SK-N-SH (cell line): ENCODE measurements at regions of chr1 and their contacts with region 1.

Region 1: DNA sequence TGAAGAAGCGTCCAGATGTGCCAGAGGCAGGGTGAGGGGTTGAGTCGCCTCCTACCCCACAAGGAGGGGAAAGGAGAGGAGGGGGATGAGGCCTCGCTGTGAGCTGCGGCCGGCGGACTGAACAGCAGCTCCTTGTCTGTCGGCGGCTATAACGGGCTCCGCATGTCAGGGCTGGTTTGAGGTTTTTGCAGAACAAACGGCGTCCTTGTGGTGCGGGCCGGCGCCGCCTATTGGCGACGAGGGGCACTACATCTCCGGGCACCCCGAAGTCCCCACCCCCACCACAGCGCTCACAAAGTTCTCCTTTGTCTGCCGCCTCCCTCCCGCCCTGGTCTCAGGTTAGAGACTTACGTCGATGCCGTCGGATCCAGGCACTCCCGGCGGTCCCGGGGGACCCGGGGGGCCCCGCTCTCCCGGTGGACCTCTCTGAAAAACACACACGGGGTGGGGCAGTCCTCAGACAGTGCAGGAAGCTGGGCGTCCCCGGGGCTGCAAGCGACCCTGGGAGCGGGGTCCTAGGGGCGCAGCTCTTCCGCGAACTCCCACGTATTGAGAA is 1.8 kb downstream of the COL9A2 start:
- DNase-seq: peak; percentile 92
- H3K4me3 ChIP-seq: peak overlapping the region; percentile 29 to 47; a peak in 3 of 4 replicates
- H3K27ac ChIP-seq: no peak overlapping the region
- H3K4me1 ChIP-seq: peaks cover 0 to 6% of the 10 kb centered on the region in 2 experiments; a peak in 1 of 4 replicates
- H3K27me3 ChIP-seq: no peaks in the 10 kb centered on the region; the same call in 1 of the 2 replicates
- CTCF ChIP-seq: peak; percentile 75
- EP300 ChIP-seq: no peak
- RAD21 ChIP-seq: peak; percentile 58

Region 2: GRCh38 chr1:40178200-40178599 is 137.1 kb before region 1 on chr1:
- CTCF ChIA-PET with region 1: no interaction called
- POLR2A ChIA-PET with region 1: no interaction called
- DNase-seq: no peak
- H3K4me3 ChIP-seq: no peak overlapping the region
- H3K27ac ChIP-seq: no peak overlapping the region
- H3K4me1 ChIP-seq: peaks cover 0 to 9% of the 10 kb centered on the region in 2 experiments; a peak in 1 of 4 replicates
- H3K27me3 ChIP-seq: no peaks in the 10 kb centered on the region
- CTCF ChIP-seq: no peak
- EP300 ChIP-seq: no peak
- RAD21 ChIP-seq: no peak

Region 3: DNA sequence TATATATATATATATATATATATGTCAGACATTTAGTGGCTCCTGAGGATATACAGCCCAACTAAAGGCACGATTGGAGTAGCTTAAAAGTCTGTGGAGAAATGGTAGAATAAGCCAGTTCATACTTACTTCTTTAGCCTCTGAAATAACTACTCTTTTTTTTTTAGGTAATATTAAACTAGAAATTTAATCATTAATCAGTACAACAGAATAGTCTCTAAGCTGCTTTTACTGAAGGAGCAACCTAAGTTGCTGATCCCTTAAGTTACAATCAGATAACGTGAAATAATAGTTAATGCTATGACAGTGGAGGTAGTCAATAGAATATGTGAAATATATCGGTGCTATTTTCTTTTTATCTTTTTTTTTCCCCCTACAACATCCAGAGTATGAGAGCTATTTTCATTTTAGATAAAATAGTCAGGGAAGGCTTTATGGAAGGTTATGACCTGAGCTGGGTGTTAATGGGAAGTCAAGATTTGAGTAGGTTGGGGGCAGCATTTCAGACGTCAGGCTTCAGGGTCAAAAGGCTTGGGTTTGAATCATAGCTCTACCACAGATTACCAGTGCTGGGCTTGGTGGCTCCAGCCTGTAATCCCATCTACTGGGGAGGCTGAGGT is 41.7 kb before region 1 on chr1:
- CTCF ChIA-PET with region 1: interaction called, 10 read pairs
- POLR2A ChIA-PET with region 1: no interaction called
- DNase-seq: no peak
- H3K4me3 ChIP-seq: no peak overlapping the region
- H3K27ac ChIP-seq: no peak overlapping the region
- H3K4me1 ChIP-seq: no peaks in the 10 kb centered on the region; a peak in 1 of 4 replicates
- H3K27me3 ChIP-seq: no peaks in the 10 kb centered on the region
- CTCF ChIP-seq: no peak
- EP300 ChIP-seq: no peak
- RAD21 ChIP-seq: no peak

Region 4: DNA sequence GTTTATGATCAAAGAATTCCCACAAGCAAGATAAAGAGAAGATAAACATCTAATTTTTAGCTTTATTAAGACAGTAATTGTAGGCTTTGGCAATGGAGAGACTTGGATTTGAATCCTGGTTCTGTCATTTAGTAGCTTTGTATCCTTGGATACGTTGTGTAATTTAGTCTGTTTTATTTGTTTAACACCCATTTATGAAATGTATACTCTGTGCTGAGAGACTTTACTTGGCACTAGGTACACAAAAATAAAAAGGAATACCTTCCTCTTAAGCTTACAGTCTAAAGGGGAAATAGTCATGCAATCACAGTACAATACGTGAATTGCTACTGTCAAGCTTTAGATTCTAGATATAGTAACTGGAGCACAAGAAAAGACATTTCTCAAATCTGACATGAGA is 33.5 kb before region 1 on chr1:
- CTCF ChIA-PET with region 1: interaction called, 12 read pairs
- POLR2A ChIA-PET with region 1: no interaction called
- DNase-seq: no peak
- H3K4me3 ChIP-seq: no peak overlapping the region
- H3K27ac ChIP-seq: no peak overlapping the region
- H3K4me1 ChIP-seq: no peaks in the 10 kb centered on the region
- H3K27me3 ChIP-seq: no peaks in the 10 kb centered on the region
- CTCF ChIP-seq: no peak
- EP300 ChIP-seq: no peak
- RAD21 ChIP-seq: no peak

Region 5: GRCh38 chr1:40299366-40300248 is 15.7 kb before region 1 on chr1:
- CTCF ChIA-PET with region 1: interaction called, 22 read pairs
- POLR2A ChIA-PET with region 1: no interaction called
- DNase-seq: no peak
- H3K4me3 ChIP-seq: no peak overlapping the region
- H3K27ac ChIP-seq: no peak overlapping the region
- H3K4me1 ChIP-seq: no peaks in the 10 kb centered on the region; a peak in 1 of 4 replicates
- H3K27me3 ChIP-seq: no peaks in the 10 kb centered on the region
- CTCF ChIP-seq: no peak
- EP300 ChIP-seq: no peak
- RAD21 ChIP-seq: no peak

Region 6: DNA sequence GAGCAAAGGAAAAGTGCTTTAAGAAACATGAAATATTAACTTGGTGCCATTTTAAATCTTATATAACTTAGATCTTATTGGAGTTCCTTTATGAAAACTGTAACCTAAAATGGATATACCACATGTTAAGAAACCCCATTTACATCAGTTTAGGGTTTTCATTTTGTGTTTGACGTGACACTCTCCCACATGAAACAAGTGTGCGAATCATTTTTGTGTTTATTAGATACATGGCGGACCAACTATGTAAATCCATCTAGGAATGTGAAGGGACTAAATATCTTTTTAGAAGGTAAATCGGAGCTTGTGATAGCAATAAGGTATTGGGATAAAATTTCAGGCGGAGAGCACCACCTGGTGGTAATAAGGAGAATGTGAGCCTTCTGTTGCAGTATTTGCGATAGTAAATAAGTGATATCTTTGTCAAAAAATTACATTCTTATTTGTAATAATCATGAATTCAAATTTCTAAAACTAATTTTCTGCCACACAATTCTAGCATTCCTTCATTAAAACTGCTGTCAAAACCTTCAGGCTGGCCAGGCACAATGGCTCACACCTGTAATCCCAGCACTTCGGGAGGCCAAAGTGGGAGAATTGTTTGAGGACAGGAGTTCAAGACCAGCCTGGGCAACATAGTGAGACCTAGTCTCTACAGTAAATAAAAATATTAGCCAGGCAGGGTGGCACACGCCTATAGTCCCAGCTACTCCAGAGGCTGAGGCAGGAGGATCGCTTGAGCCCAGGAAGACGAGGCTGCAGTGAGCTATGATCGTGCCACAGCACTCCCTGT is 89.5 kb after region 1 on chr1:
- CTCF ChIA-PET with region 1: interaction called, 15 read pairs
- POLR2A ChIA-PET with region 1: no interaction called
- DNase-seq: peak; percentile 49
- H3K4me3 ChIP-seq: no peak overlapping the region; a peak in 1 of 4 replicates
- H3K27ac ChIP-seq: no peak overlapping the region
- H3K4me1 ChIP-seq: no peaks in the 10 kb centered on the region; a peak in 2 of 4 replicates
- H3K27me3 ChIP-seq: no peaks in the 10 kb centered on the region
- CTCF ChIP-seq: peak; percentile 94
- EP300 ChIP-seq: no peak
- RAD21 ChIP-seq: peak; percentile 89

Region 7: GRCh38 chr1:40583980-40584379 is 268.7 kb after region 1 on chr1:
- CTCF ChIA-PET with region 1: no interaction called
- POLR2A ChIA-PET with region 1: no interaction called
- DNase-seq: no peak
- H3K4me3 ChIP-seq: no peak overlapping the region
- H3K27ac ChIP-seq: peak overlapping the region in 1 of 2 experiments; percentile 29; a peak in 2 of 4 replicates
- H3K4me1 ChIP-seq: no peaks in the 10 kb centered on the region
- H3K27me3 ChIP-seq: no peaks in the 10 kb centered on the region
- CTCF ChIP-seq: no peak
- EP300 ChIP-seq: no peak
- RAD21 ChIP-seq: no peak